IMR-90 (cell line): ENCODE measurements at regions of chr9 and their contacts with region 1.

Region 1: GRCh38 chr9:35116898-35117551 is 1.4 kb upstream of the ATOSB start:
- DNase-seq: peak; percentile 90
- ATAC-seq: peak; percentile 50
- H3K4me3 ChIP-seq: peak overlapping the region; percentile 88
- H3K27ac ChIP-seq: no peak overlapping the region
- H3K4me1 ChIP-seq: peaks cover 14% of the 10 kb centered on the region
- H3K27me3 ChIP-seq: peaks cover 3% of the 10 kb centered on the region
- CTCF ChIP-seq: peak; percentile 97
- POLR2A ChIP-seq: 0 out of 2 replicates have a peak, but pooled peaks have one; percentile 48
- RAD21 ChIP-seq: peak; percentile 95

Region 2: GRCh38 chr9:35258676-35259474 is 141.8 kb after region 1 on chr9:
- CTCF ChIA-PET with region 1: interaction called, 6 read pairs
- POLR2A ChIA-PET with region 1: interaction called, 3 read pairs
- dilution Hi-C with region 1: no loop called
- in situ Hi-C with region 1: loop called (anchors 10 kb)
- intact Hi-C with region 1: loop called (anchors 1 kb)
- DNase-seq: peak; percentile 66
- ATAC-seq: peak; percentile 93
- H3K4me3 ChIP-seq: no peak overlapping the region
- H3K27ac ChIP-seq: no peak overlapping the region
- H3K4me1 ChIP-seq: no peaks in the 10 kb centered on the region
- H3K27me3 ChIP-seq: no peaks in the 10 kb centered on the region
- CTCF ChIP-seq: peak; percentile 74
- POLR2A ChIP-seq: no peak
- RAD21 ChIP-seq: peak; percentile 72

Region 3: GRCh38 chr9:35277628-35278359 is 160.8 kb after region 1 on chr9:
- CTCF ChIA-PET with region 1: no interaction called
- POLR2A ChIA-PET with region 1: no interaction called
- dilution Hi-C with region 1: no loop called
- in situ Hi-C with region 1: no loop called
- intact Hi-C with region 1: loop called (anchors 5 kb)
- DNase-seq: peak; percentile 87
- ATAC-seq: peak; percentile 72
- H3K4me3 ChIP-seq: no peak overlapping the region
- H3K27ac ChIP-seq: no peak overlapping the region
- H3K4me1 ChIP-seq: peaks cover 2% of the 10 kb centered on the region; the same call in 1 of the 2 replicates
- H3K27me3 ChIP-seq: no peaks in the 10 kb centered on the region
- CTCF ChIP-seq: no peak
- POLR2A ChIP-seq: no peak
- RAD21 ChIP-seq: no peak

Region 4: GRCh38 chr9:35481347-35481975 is 364.4 kb after region 1 on chr9:
- CTCF ChIA-PET with region 1: interaction called, 7 read pairs
- POLR2A ChIA-PET with region 1: no interaction called
- dilution Hi-C with region 1: no loop called
- in situ Hi-C with region 1: loop called (anchors 5 kb)
- intact Hi-C with region 1: loop called (anchors 1 kb)
- DNase-seq: peak; percentile 75
- ATAC-seq: peak; percentile 78
- H3K4me3 ChIP-seq: no peak overlapping the region
- H3K27ac ChIP-seq: no peak overlapping the region
- H3K4me1 ChIP-seq: peaks cover 4% of the 10 kb centered on the region; the same call in 1 of the 2 replicates
- H3K27me3 ChIP-seq: peaks cover 3% of the 10 kb centered on the region; the same call in 1 of the 2 replicates
- CTCF ChIP-seq: peak; percentile 89
- POLR2A ChIP-seq: no peak
- RAD21 ChIP-seq: peak; percentile 89